ENCODE measurements at regions of chr7 and their contacts with region 1.

Region 1: DNA sequence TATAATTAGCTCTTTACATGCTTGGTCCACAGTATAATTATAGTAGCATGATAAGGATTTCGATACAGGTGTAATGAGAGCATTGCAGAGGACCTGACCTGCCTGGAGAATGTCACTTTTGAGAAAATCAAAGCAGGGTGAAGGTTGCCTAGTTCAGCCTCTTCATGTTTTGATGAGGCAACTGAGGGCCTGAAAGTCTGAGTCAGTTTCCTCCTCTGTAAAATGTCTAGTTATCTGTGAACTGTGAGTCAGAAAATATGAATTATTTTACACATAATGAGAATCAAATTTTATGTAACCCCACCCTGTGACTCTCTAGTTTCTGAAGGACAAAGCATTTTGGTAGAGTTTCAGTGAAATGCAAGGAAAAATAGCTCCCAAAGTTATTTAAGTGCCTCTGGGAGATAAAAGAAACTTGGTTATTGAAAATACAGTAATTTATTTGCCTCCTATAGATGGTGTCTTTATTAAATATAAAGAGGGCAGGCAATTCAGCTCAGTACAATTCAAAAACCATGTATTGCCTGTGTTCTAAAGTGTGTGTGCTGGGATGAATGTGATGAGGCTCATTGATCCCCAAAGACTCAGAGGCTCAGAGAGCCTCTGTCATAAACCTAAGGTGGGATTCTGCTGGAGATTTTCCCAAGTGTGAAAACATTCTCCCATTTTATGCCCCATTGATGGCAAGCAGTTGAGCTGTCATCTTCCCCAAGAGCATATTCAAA is 37.3 kb upstream of the SAMD9L start:
- DNase-seq: peak; percentile 28
- H3K4me3 Mint-ChIP-seq: no peak overlapping the region
- H3K27ac Mint-ChIP-seq: no peak overlapping the region
- H3K4me1 Mint-ChIP-seq: peaks cover 9% of the 10 kb centered on the region
- H3K27me3 Mint-ChIP-seq: peaks cover 40% of the 10 kb centered on the region

Region 2: GRCh38 chr7:92751902-92752901 is 433.3 kb before region 1 on chr7:
- CTCF ChIA-PET with region 1: no interaction called
- POLR2A ChIA-PET with region 1: no interaction called
- intact Hi-C with region 1: no loop called
- DNase-seq: no peak
- H3K4me3 Mint-ChIP-seq: no peak overlapping the region
- H3K27ac Mint-ChIP-seq: peak overlapping the region; percentile 72
- H3K4me1 Mint-ChIP-seq: peaks cover 63% of the 10 kb centered on the region
- H3K27me3 Mint-ChIP-seq: no peaks in the 10 kb centered on the region

Region 3: GRCh38 chr7:93147363-93147762 is 38.1 kb before region 1 on chr7:
- CTCF ChIA-PET with region 1: no interaction called
- POLR2A ChIA-PET with region 1: no interaction called
- intact Hi-C with region 1: loop called (anchors 5 kb)
- DNase-seq: peak; percentile 55
- H3K4me3 Mint-ChIP-seq: peak overlapping the region; percentile 84
- H3K27ac Mint-ChIP-seq: peak overlapping the region; percentile 82
- H3K4me1 Mint-ChIP-seq: peaks cover 27% of the 10 kb centered on the region
- H3K27me3 Mint-ChIP-seq: no peaks in the 10 kb centered on the region

Region 4: GRCh38 chr7:93165447-93165846 is 20.0 kb before region 1 on chr7:
- CTCF ChIA-PET with region 1: no interaction called
- POLR2A ChIA-PET with region 1: no interaction called
- intact Hi-C with region 1: loop called (anchors 1 kb)
- DNase-seq: no peak
- H3K4me3 Mint-ChIP-seq: no peak overlapping the region
- H3K27ac Mint-ChIP-seq: no peak overlapping the region
- H3K4me1 Mint-ChIP-seq: peaks cover 9% of the 10 kb centered on the region
- H3K27me3 Mint-ChIP-seq: no peaks in the 10 kb centered on the region

Region 5: GRCh38 chr7:93894966-93895640 is 709.6 kb after region 1 on chr7:
- CTCF ChIA-PET with region 1: no interaction called
- POLR2A ChIA-PET with region 1: no interaction called
- intact Hi-C with region 1: no loop called
- DNase-seq: no peak
- H3K4me3 Mint-ChIP-seq: no peak overlapping the region
- H3K27ac Mint-ChIP-seq: no peak overlapping the region
- H3K4me1 Mint-ChIP-seq: peaks cover 5% of the 10 kb centered on the region
- H3K27me3 Mint-ChIP-seq: peaks cover 29% of the 10 kb centered on the region